Activated CD4-positive, alpha-beta memory T cell treated with anti-CD3 and anti-CD28 coated beads for 36 hours (primary cell): ENCODE measurements at regions of chr12 and their contacts with region 1.

Region 1: GRCh38 chr12:44859998-44860689 is 16.0 kb downstream of the NELL2 start:
- DNase-seq: no peak
- H3K4me3 Mint-ChIP-seq: no peak overlapping the region
- H3K27ac Mint-ChIP-seq: peak overlapping the region; percentile 75
- H3K4me1 Mint-ChIP-seq: peaks cover 77% of the 10 kb centered on the region
- H3K27me3 Mint-ChIP-seq: no peaks in the 10 kb centered on the region

Region 2: GRCh38 chr12:44827832-44828438 is 32.2 kb before region 1 on chr12:
- CTCF ChIA-PET with region 1: interaction called, 3 read pairs
- POLR2A ChIA-PET with region 1: no interaction called
- intact Hi-C with region 1: loop called (anchors 1 kb)
- DNase-seq: no peak
- H3K4me3 Mint-ChIP-seq: peak overlapping the region; percentile 42
- H3K27ac Mint-ChIP-seq: peak overlapping the region; percentile 89
- H3K4me1 Mint-ChIP-seq: peaks cover 57% of the 10 kb centered on the region
- H3K27me3 Mint-ChIP-seq: no peaks in the 10 kb centered on the region

Region 3: GRCh38 chr12:44835641-44836379 is 24.3 kb before region 1 on chr12:
- CTCF ChIA-PET with region 1: no interaction called
- POLR2A ChIA-PET with region 1: no interaction called
- intact Hi-C with region 1: loop called (anchors 1 kb)
- DNase-seq: no peak
- H3K4me3 Mint-ChIP-seq: peak overlapping the region; percentile 6
- H3K27ac Mint-ChIP-seq: peak overlapping the region; percentile 89
- H3K4me1 Mint-ChIP-seq: peaks cover 88% of the 10 kb centered on the region
- H3K27me3 Mint-ChIP-seq: no peaks in the 10 kb centered on the region

Region 4: GRCh38 chr12:44993161-44993560 is 133.0 kb after region 1 on chr12:
- CTCF ChIA-PET with region 1: no interaction called
- POLR2A ChIA-PET with region 1: no interaction called
- intact Hi-C with region 1: no loop called
- DNase-seq: no peak
- H3K4me3 Mint-ChIP-seq: no peak overlapping the region
- H3K27ac Mint-ChIP-seq: no peak overlapping the region
- H3K4me1 Mint-ChIP-seq: no peaks in the 10 kb centered on the region
- H3K27me3 Mint-ChIP-seq: peaks cover 2% of the 10 kb centered on the region